H1 (cell line): ENCODE measurements at regions of chr16 and their contacts with region 1.

Region 1: DNA sequence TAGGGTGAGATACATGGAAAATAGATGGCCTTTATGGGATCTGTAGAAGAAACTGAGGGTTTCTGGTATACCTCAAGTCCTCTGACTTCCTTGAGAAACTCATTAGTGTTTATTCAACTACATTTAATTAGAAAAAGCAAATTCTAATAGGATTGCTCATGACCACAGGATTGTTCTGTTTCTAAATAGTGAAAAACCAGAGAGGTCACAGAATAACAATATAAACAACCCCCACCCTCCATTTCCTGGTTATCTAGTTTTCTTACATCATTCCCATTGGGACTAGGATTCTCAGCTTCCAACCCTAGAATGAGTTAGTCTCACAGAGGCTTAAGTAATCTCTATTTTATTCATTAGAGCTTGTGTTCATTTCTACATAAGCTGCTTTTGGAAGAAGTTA is 30.0 kb downstream of the SF3B3 start:
- DNase-seq: no peak
- H3K4me3 ChIP-seq: no peak overlapping the region
- H3K27ac ChIP-seq: no peak overlapping the region
- H3K4me1 ChIP-seq: no peaks in the 10 kb centered on the region
- H3K27me3 ChIP-seq: no peaks in the 10 kb centered on the region
- CTCF ChIP-seq: no peak
- EP300 ChIP-seq: no peak
- POLR2A ChIP-seq: no peak
- RAD21 ChIP-seq: no peak

Region 2: DNA sequence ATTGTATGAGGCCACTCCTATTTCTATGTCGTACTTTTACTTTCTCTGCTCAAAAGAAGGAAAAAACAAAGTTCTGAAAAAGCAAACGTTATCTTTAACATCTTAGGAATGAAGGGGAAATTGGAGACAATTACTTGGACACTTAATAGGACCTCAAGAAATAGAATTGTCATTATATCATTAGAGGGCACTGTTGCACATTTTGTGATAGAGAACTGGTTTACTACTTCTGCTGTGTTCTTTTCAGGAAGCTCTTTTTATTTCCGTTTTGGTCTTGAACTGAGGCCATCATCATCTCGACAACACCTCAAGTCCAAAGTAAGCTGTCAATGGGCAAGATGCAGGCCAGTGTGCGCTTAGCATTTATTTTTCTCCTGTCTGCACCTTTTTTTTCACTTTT is 44.9 kb before region 1 on chr16:
- CTCF ChIA-PET with region 1: no interaction called
- POLR2A ChIA-PET with region 1: no interaction called
- DNase-seq: no peak
- H3K4me3 ChIP-seq: no peak overlapping the region
- H3K27ac ChIP-seq: no peak overlapping the region
- H3K4me1 ChIP-seq: no peaks in the 10 kb centered on the region
- H3K27me3 ChIP-seq: no peaks in the 10 kb centered on the region
- CTCF ChIP-seq: no peak
- EP300 ChIP-seq: no peak
- POLR2A ChIP-seq: no peak
- RAD21 ChIP-seq: no peak

Region 3: DNA sequence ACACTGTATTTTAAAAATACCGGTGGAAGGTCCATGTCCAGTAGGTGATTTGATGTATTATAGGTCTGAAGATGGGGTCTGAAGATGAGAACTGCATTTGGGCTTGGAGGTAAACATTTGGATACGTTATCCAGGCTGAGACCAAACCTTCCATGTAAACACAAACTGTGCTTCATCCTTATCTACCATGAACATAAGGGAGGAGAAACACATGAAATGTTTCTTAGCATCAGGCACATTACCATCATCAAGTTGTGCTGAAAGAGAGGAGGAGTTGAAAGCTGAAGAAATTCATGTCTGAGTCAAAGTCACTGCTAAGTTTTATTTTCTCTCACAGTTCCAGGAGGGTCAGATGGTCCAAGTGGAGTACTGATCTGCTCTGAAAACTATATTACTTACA is 18.7 kb before region 1 on chr16:
- CTCF ChIA-PET with region 1: interaction called, 5 read pairs
- POLR2A ChIA-PET with region 1: interaction called, 525 read pairs
- DNase-seq: no peak
- H3K4me3 ChIP-seq: no peak overlapping the region
- H3K27ac ChIP-seq: no peak overlapping the region
- H3K4me1 ChIP-seq: no peaks in the 10 kb centered on the region
- H3K27me3 ChIP-seq: no peaks in the 10 kb centered on the region
- CTCF ChIP-seq: no peak
- EP300 ChIP-seq: no peak
- POLR2A ChIP-seq: no peak
- RAD21 ChIP-seq: no peak

Region 4: DNA sequence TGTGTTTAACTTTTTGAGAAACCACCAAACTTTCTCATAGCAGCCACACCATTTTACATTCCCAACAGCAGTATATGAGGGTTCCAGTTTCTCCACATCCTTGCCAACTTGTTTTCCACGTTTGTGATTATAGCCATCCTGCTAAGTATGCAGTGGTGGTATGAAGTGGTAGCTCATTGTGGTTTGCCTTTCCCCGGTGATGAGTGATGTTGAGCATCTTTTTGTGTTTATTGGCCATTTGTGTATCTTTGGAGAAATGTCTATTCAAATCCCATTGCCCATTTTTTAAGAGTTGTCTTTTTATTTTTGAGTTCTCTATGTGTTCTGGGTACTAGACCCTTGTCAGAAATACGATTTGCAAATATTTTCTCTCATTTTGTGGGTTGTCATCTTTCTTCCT is 12.7 kb before region 1 on chr16:
- CTCF ChIA-PET with region 1: interaction called, 5 read pairs
- POLR2A ChIA-PET with region 1: interaction called, 525 read pairs
- DNase-seq: no peak
- H3K4me3 ChIP-seq: no peak overlapping the region
- H3K27ac ChIP-seq: no peak overlapping the region
- H3K4me1 ChIP-seq: no peaks in the 10 kb centered on the region
- H3K27me3 ChIP-seq: no peaks in the 10 kb centered on the region
- CTCF ChIP-seq: no peak
- EP300 ChIP-seq: no peak
- POLR2A ChIP-seq: no peak
- RAD21 ChIP-seq: no peak

Region 5: GRCh38 chr16:70568601-70569237 is 15.1 kb after region 1 on chr16:
- CTCF ChIA-PET with region 1: interaction called, 11 read pairs
- POLR2A ChIA-PET with region 1: interaction called, 525 read pairs
- DNase-seq: no peak
- H3K4me3 ChIP-seq: no peak overlapping the region
- H3K27ac ChIP-seq: no peak overlapping the region
- H3K4me1 ChIP-seq: no peaks in the 10 kb centered on the region
- H3K27me3 ChIP-seq: no peaks in the 10 kb centered on the region
- CTCF ChIP-seq: no peak
- EP300 ChIP-seq: no peak
- POLR2A ChIP-seq: no peak
- RAD21 ChIP-seq: no peak